ENCODE measurements at regions of chr6 and their contacts with region 1.

Region 1: GRCh38 chr6:127484212-127484858 is 25.1 kb upstream of the KIAA0408 start:
- DNase-seq: peak in 1 of 2 experiments; percentile 83
- H3K4me3 ChIP-seq: peak overlapping the region; percentile 12; the same call in 1 of the 2 replicates
- H3K27ac ChIP-seq: peak overlapping the region; percentile 62
- H3K4me1 ChIP-seq: peaks cover 45% of the 10 kb centered on the region
- H3K27me3 ChIP-seq: no peaks in the 10 kb centered on the region
- CTCF ChIP-seq: no peak

Region 2: DNA sequence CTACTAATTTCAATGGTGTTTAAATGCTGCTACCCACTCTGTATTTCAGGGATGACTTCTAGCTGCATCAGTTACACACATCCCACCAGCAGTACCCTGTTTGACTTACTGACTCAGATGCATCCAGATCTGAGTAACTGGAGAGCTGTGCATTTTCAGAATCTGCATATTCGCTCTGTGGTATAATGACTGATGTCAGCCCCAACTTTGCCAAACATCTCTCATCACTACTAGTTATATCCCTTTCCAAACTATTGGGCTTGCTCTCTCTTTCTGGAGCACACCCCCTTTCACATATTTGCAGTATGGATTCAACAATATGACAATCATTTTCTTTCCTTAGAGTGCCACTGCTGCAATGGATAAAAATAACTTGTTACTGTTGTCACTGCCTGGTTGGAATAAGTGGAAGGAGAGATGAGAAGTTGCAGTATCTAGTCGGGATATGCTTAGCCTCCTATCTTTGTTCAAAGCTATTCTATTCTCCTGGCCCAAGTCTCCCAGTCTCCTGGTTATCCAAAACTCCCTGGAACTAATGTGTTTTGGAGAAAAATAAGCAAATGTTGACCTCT is 369.2 kb before region 1 on chr6:
- CTCF ChIA-PET with region 1: no interaction called
- POLR2A ChIA-PET with region 1: no interaction called
- intact Hi-C with region 1: no loop called
- DNase-seq: peak in 1 of 2 experiments; percentile 19
- H3K4me3 ChIP-seq: no peak overlapping the region
- H3K27ac ChIP-seq: no peak overlapping the region
- H3K4me1 ChIP-seq: no peaks in the 10 kb centered on the region
- H3K27me3 ChIP-seq: peaks cover 32% of the 10 kb centered on the region
- CTCF ChIP-seq: no peak

Region 3: DNA sequence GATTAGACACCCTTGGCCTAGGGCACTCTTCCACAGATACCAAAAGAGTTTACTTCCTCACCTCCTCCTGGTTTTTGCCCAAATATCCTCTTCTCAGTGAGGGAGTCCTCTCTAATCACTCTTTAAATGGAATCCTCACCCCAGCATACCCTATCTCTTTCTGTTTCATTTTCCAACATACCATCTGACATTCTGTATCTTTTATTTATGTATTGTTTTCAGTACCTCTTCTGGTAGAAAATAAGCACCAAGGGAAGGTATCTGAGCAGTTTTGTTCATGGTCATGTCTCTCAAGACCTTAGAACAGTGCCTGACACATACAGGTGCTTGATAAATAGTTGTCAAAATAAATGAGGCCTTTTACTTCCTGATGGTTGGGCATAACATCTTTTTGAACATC is 80.2 kb before region 1 on chr6:
- CTCF ChIA-PET with region 1: no interaction called
- POLR2A ChIA-PET with region 1: no interaction called
- intact Hi-C with region 1: no loop called
- DNase-seq: no peak
- H3K4me3 ChIP-seq: no peak overlapping the region
- H3K27ac ChIP-seq: no peak overlapping the region
- H3K4me1 ChIP-seq: no peaks in the 10 kb centered on the region
- H3K27me3 ChIP-seq: no peaks in the 10 kb centered on the region
- CTCF ChIP-seq: no peak

Region 4: GRCh38 chr6:127516666-127517273 is 32.4 kb after region 1 on chr6:
- CTCF ChIA-PET with region 1: no interaction called
- POLR2A ChIA-PET with region 1: no interaction called
- intact Hi-C with region 1: loop called (anchors 5 kb)
- DNase-seq: peak; percentile 16 to 44
- H3K4me3 ChIP-seq: peak overlapping the region; percentile 70
- H3K27ac ChIP-seq: no peak overlapping the region
- H3K4me1 ChIP-seq: peaks cover 9% of the 10 kb centered on the region; the same call in 1 of the 2 replicates
- H3K27me3 ChIP-seq: peaks cover 8% of the 10 kb centered on the region; the same call in 1 of the 2 replicates
- CTCF ChIP-seq: peak; percentile 89

Region 5: DNA sequence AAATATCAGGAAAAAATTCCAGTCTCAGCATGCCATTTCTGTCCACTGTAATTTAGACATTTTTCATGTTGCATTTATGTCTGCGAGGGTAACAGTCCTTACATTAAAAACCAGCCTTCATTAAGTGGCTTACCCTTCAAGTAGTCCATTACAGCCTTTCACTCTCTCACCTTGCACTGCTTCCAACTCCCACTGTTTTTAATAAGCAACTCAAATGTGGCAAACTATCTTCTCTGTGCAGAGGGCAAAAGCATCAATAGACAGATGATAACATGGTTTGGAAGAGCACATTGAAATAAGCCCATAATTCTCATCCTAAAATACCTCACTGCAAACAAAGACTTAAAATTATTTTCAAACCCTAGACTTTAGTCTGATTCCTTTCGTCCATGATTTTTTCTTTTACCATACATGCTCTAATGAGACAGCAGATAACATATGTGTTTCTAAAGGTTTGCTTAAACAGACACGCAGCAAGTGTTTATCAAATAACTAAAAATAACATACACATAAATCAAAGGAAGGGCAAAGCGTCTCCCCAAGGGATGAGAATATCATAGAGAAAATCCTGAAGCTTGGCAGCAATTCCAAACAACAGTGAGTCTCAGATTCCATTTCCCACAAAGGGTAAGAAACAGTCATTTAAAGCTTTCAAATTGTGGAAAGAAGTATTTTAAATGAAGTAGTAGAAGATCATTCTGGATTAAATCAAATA is 905.6 kb after region 1 on chr6:
- CTCF ChIA-PET with region 1: no interaction called
- POLR2A ChIA-PET with region 1: no interaction called
- intact Hi-C with region 1: no loop called
- DNase-seq: no peak
- H3K4me3 ChIP-seq: no peak overlapping the region
- H3K27ac ChIP-seq: no peak overlapping the region
- H3K4me1 ChIP-seq: no peaks in the 10 kb centered on the region
- H3K27me3 ChIP-seq: no peaks in the 10 kb centered on the region
- CTCF ChIP-seq: no peak